Cardiac septum (tissue), 1 donor: ENCODE measurements at regions of chr22 and their contacts with region 1.

Region 1: DNA sequence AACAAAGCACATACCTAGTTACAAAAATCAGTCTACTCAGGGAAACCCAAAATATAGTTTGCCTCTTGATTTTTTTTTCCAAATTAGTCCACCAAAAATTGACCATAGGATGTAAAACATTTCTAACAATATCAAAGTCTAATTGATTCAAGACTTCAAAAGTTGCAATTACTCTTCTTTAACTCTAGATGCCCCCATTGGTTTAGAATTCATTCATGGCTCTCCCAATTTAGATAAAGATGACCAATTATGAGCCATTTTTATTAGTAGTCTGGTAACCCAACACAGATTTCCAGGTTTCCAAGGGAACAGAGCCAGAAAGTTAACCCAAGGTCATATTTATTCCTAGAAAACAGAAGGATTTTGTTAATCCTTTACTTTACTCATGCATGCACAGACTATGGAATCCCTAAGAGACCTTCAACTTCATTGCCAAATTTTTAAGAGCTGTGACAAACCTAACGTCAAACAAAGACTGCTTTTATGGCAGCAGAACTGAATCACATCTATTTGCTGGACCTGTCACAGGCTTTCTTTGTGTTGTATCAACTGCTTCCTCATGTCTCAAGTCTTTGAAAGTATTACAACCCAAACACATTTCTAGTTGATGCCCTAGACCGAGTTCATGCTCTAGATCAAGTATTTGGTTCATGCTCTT is 55.3 kb downstream of the C22orf42 start:
- DNase-seq: no peak

Region 2: GRCh38 chr22:32076761-32077084 is 27.1 kb before region 1 on chr22:
- intact Hi-C with region 1: no loop called
- DNase-seq: no peak

Region 3: DNA sequence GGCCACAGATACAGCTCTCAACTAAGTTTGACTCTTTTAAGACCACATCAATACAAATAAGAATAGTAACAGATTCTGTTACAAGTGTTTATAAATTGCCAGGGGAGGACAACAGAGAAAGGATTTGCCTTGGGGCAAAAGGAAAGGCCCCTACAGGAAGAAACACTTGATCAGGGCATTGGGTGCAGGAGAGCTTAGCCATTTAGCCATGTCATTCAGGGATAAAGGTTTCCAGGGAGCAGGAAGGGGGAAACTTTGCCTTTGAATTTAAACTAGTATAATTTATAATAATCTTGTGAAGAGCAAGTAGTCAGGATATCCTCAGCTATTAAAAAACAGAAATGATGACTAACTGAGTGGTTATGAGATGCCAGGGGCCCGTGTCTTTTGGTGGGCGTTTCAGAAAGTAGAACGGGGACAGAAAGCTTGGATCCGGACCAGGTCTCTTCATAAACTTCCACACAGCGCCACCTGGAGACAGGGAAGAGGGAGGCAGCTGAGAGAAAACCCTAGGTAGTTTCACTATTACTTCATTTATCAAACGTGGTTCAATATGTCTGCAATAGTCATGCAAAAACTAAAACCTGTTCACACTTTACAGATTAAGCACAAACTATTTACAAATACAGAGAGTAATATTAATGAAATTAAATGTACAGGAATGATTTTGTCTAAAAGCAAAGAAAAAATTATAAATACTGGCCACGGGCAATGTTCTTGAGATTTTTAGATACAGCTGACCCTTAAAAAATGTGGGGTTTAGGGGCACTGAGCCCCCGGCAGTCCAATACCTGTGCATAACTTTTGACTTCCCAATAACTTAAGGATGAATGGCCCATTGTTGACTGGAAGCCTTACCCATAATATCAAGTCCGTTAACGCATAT is 162.3 kb after region 1 on chr22:
- intact Hi-C with region 1: loop called (anchors 10 kb)
- DNase-seq: no peak